ENCODE measurements at regions of chr2 and their contacts with region 1.

Region 1: DNA sequence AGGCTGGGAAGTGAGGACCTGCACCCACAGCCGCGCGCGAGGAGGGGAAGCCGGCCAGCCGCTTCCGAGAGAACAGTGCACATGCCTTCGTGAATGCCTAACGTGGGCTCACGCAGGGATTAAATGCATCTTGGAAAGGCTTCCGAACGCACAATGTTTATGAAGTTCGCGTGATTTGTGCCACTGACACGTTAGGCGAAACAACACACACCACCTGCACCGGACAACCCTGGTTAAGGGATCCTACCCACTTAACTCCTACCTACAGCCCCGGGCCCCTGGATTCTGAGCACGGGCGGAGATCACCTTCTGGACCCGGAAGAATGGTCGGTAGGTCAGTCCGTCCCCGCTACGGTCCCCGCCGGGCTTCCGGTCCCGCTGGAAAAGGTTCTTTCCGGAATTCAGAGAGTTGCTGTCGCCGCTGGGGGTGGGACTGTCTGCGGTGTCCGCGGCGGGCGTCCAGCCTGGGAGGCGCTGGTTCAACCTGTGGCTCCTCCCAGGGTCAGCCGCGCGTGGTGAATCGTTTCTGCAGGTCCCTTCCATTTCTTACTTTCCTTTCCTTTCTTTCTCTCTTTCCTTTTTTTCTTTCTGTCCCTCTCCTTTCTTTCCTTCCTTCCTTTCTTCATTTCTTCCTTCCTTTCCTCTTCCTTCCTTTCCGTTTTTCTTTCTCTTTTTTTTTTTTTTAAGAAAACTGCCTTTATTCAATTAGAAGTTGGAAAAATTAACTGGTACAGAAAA is at the start of gene MTIF2:
- DNase-seq: peak; percentile 95
- ATAC-seq: peak; percentile 99
- H3K4me3 ChIP-seq: peak within 1 kb of the TSS; percentile 73 to 81 (median 73)
- H3K27ac ChIP-seq: peak within 1 kb of the TSS; percentile 91
- H3K4me1 ChIP-seq: peaks cover 16% of the 10 kb centered on the region
- H3K27me3 ChIP-seq: no peaks in the 10 kb centered on the region; a peak in 1 of 5 replicates
- CTCF ChIP-seq: peak; percentile 64
- EP300 ChIP-seq: peak; percentile 69 to 78
- POLR2A ChIP-seq: peak; percentile 99
- RAD21 ChIP-seq: no peak; the same call in 1 of the 2 replicates
- total RNA-seq, gene MTIF2: 92.1 and 118 TPM in 2 replicates

Region 2: DNA sequence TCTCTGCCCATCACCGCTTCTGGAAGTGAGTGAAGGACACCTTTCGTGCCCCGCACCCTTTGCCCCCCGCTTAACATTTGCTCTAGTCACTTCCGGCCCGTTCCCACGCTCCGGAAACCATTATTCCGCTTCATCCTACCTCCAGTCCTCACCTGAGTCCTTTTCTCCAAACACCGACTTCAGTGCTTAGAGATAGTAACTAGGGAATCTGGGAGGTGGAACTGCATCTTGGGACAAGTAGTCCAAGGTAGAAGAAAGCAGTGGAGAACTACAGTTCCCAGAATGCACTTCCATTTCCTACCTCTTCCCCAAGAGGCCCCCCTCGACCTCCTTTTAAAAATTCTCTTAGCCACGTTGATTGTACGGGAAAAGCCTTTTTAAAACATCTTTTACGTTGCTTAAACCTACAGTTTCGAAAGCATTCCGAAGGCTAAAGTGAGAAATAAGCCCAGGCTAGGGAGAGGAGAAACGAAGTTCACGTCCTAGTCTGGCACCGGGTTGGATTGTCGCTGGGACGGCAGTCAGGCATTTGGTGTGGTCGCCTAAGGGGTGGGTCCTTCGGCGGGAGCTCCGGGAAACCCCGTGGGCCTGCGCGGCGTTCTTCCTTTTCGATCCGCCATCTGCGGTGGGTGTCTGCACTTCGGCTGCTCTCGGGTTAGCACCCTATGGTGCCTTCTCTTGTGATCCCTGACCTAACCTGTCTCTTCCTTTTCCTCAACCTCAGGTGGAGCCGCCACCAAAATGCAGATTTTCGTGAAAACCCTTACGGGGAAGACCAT is 36.8 kb before region 1 on chr2 and contains the starts of genes CLHC1 and RPS27A:
- CTCF ChIA-PET with region 1: no interaction called
- POLR2A ChIA-PET with region 1: interaction called, 6 read pairs
- in situ Hi-C with region 1: loop called (anchors 5 kb)
- intact Hi-C with region 1: loop called (anchors 2 kb)
- DNase-seq: peak; percentile 99
- ATAC-seq: peak; percentile 96
- H3K4me3 ChIP-seq: peak within 1 kb of the TSS; percentile 82 to 95 (median 93)
- H3K27ac ChIP-seq: peak within 1 kb of the TSS; percentile 98
- H3K4me1 ChIP-seq: peaks cover 59% of the 10 kb centered on the region
- H3K27me3 ChIP-seq: no peaks in the 10 kb centered on the region; a peak in 1 of 5 replicates
- CTCF ChIP-seq: no peak
- EP300 ChIP-seq: 0 out of 4 replicates have a peak, but pooled peaks of 1 of the 2 experiments have one; percentile 28
- POLR2A ChIP-seq: peak; percentile 98
- RAD21 ChIP-seq: peak; percentile 50
- total RNA-seq, gene CLHC1: 12.1 and 12.6 TPM in 2 replicates
- total RNA-seq, gene RPS27A: 2,779 and 3,447 TPM in 2 replicates

Region 3: DNA sequence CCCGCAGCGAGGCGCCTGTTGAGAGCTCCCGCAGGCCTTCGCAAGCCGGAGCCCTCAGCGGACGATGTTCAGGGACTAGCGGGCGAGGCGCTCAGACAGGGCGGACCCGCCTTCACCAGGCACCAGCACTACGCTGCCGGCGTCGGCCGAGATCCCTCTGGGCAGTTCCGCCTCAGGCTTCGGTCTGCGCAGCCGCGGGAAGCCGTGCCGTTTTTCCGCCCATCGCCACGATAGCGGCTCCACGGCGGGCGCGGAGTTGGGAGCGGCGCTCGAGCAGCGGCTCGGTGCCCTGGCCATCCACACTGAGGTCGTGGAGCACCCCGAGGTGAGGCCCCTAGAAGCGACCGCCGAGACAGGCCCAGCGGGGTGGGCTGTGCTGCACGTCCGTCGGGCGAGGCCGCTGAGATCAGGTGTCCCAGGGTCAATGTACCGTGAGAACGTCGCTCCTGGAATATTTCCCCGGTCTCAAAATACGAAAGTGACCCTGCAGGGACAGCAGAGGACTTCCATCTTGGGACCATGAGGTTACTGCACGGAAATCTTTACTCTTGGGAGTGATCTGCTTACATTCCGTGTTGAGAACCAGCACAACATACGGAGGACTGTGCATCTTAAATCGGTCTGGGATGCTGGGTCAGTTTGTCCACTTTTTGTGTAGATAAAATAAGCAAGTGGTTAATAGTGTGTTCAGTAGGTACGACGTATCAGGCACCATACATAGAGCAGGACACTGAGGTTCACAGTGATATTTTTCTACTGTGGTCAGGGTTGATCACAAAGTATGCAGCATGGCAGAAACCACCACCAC is 13.2 kb after region 1 on chr2:
- CTCF ChIA-PET with region 1: no interaction called
- POLR2A ChIA-PET with region 1: interaction called, 11 read pairs
- in situ Hi-C with region 1: no loop called
- intact Hi-C with region 1: no loop called
- DNase-seq: peak; percentile 79
- ATAC-seq: peak; percentile 98
- H3K4me3 ChIP-seq: peak overlapping the region; percentile 69 to 82 (median 81)
- H3K27ac ChIP-seq: peak overlapping the region; percentile 89
- H3K4me1 ChIP-seq: peaks cover 70% of the 10 kb centered on the region
- H3K27me3 ChIP-seq: no peaks in the 10 kb centered on the region; a peak in 1 of 5 replicates
- CTCF ChIP-seq: peak; percentile 40
- EP300 ChIP-seq: no peak
- POLR2A ChIP-seq: peak; percentile 92
- RAD21 ChIP-seq: peak; percentile 70